Colonic mucosa (tissue), 4 donors: ENCODE measurements at regions of chr15 and their contacts with region 1.

Region 1: DNA sequence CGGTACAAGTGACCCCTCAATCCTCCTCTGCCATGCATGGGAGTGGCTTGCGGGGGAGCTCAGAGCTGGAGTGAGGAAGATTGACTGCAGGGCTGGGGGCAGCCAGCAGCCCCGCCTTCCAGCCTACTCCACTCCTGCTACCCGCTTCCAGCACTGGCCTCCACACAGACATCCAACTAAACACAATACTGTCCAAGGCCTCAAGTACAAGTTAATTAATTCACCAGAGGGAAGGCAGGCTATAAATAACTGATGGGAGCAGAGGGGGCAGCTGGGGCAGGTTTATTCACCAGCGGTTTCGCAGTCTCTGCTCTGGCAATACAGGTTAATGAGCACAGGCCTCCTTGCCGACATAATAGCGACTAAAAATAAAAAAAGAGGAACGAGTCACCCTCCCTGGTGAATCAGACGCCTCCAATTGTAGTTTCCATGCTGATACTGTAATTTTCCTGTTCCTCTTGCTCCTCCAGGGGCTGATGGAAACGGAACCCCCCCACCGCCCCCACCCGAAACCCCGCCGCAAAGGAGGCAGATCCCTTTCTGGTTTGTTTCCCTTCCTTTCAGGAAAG is 166.4 kb upstream of the TLE3 start:
- DNase-seq: no peak
- H3K4me3 ChIP-seq: no peak overlapping the region
- H3K27ac ChIP-seq: no peak overlapping the region
- H3K4me1 ChIP-seq: no peaks in the 10 kb centered on the region
- H3K27me3 ChIP-seq: no peaks in the 10 kb centered on the region
- CTCF ChIP-seq: no peak

Region 2: GRCh38 chr15:70100474-70101341 is 163.4 kb before region 1 on chr15:
- intact Hi-C with region 1: loop called (anchors 10 kb)
- DNase-seq: peak; percentile 66
- H3K4me3 ChIP-seq: peak overlapping the region; percentile 16
- H3K27ac ChIP-seq: peak overlapping the region; percentile 29
- H3K4me1 ChIP-seq: peaks cover 13% of the 10 kb centered on the region
- H3K27me3 ChIP-seq: no peaks in the 10 kb centered on the region
- CTCF ChIP-seq: no peak

Region 3: GRCh38 chr15:70339681-70340493 is 75.8 kb after region 1 on chr15:
- intact Hi-C with region 1: no loop called
- DNase-seq: no peak
- H3K4me3 ChIP-seq: no peak overlapping the region
- H3K27ac ChIP-seq: no peak overlapping the region
- H3K4me1 ChIP-seq: no peaks in the 10 kb centered on the region
- H3K27me3 ChIP-seq: no peaks in the 10 kb centered on the region
- CTCF ChIP-seq: no peak

Region 4: DNA sequence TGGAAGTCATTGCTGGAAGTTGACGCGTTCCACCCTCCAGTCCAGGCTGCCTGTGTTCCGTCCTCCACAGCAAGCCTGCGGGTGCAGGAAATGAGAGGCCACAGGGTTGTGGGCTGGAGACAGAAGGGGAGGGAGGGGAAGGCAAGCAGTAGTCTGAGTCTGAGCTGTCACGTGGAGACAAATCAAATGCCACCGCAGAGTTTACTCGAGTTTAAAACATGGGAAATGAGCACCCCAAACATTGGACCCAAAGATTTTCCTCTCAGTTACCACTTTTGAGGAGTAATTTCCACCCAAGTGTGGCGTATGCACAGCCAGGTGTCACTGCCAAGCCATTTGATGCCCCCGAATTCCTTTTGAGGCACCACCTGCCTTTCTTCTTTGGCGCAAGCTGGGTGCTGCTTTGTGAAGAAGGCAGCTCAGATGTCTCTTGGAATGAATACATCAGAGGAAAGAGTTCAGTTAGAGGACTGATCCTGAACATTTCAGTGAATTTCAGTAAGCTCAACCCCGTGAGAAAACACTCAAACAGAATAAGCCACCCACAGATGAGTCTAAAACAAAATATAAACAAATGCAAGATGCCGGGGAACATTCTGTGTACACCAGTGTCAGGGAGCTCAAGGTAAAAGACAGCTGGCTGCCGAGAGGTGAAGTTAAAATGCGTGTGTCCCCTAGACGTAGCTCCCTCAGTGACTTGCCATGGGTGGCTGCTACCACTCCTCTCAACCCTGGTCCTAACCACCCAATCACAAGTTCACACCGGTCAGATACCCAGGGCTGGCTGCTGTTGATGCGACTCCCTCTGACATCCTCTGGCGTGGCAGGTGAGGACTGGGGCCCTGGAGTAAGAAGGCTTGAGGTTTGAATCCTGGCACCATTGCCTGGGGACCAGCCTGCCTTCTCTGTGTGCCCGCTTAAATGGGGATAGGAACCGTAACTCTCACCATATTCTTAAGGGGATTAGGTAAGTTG is 295.5 kb after region 1 on chr15:
- intact Hi-C with region 1: no loop called
- DNase-seq: peak; percentile 30
- H3K4me3 ChIP-seq: no peak overlapping the region
- H3K27ac ChIP-seq: no peak overlapping the region
- H3K4me1 ChIP-seq: no peaks in the 10 kb centered on the region
- H3K27me3 ChIP-seq: no peaks in the 10 kb centered on the region
- CTCF ChIP-seq: no peak